ENCODE measurements at regions of chr10 and their contacts with region 1.

Region 1: GRCh38 chr10:34723750-34724149 is 91.3 kb downstream of the PARD3 start:
- DNase-seq: peak; percentile 78
- ATAC-seq: peak; percentile 76
- H3K4me3 ChIP-seq: no peak overlapping the region
- H3K27ac ChIP-seq: no peak overlapping the region
- H3K4me1 ChIP-seq: peaks cover 9% of the 10 kb centered on the region
- H3K27me3 ChIP-seq: no peaks in the 10 kb centered on the region
- CTCF ChIP-seq: peak; percentile 67
- POLR2A ChIP-seq: no peak
- RAD21 ChIP-seq: peak; percentile 77

Region 2: DNA sequence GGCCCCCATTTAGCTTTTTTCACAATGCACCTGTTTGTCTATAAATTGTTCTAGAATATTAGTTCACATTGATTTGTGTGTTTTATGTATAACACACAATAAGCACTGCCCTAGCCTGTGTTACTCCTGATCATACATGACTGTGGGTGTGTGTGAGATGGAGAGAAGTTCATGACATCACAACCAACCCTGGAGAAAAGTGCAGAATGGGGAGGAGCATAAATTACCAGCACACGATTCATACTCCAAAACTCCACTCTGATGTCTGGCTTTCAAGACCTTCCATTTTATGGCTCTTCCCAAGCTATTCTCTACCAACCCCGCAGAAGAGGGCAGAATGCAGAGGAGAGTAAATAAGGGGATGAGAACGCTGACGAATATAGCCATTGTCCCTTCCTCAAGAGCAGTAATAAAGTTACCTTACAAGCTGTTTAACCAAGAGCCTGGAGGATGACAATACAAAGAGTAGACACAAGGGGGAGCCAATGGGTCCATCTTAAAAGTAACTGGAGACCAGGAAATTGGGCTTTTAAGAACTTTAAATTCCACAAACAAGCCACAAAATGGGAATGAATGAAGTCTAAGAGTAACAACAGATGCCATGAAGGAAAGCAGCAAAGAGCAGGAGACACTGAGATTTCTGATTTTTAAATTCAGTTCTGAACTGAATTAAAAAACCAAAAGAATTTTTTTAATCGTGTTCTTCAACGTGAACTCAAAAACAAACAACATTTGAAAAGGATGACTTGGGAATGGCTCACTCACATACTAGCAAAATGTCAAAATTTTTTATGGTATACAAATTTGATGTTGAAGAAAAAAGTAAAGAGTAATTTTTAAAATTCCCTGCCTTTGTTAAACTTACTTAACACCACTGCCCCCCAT is 68.2 kb before region 1 on chr10:
- CTCF ChIA-PET with region 1: interaction called, 10 read pairs
- POLR2A ChIA-PET with region 1: no interaction called
- dilution Hi-C with region 1: no loop called
- in situ Hi-C with region 1: no loop called
- intact Hi-C with region 1: no loop called
- DNase-seq: peak; percentile 75
- ATAC-seq: peak; percentile 79
- H3K4me3 ChIP-seq: no peak overlapping the region
- H3K27ac ChIP-seq: no peak overlapping the region
- H3K4me1 ChIP-seq: peaks cover 5% of the 10 kb centered on the region
- H3K27me3 ChIP-seq: no peaks in the 10 kb centered on the region
- CTCF ChIP-seq: peak; percentile 66
- POLR2A ChIP-seq: no peak
- RAD21 ChIP-seq: peak; percentile 65

Region 3: GRCh38 chr10:34666008-34666705 is 57.6 kb before region 1 on chr10:
- CTCF ChIA-PET with region 1: no interaction called
- POLR2A ChIA-PET with region 1: no interaction called
- dilution Hi-C with region 1: no loop called
- in situ Hi-C with region 1: no loop called
- intact Hi-C with region 1: loop called (anchors 2 kb)
- DNase-seq: peak; percentile 94
- ATAC-seq: peak; percentile 95
- H3K4me3 ChIP-seq: no peak overlapping the region
- H3K27ac ChIP-seq: no peak overlapping the region
- H3K4me1 ChIP-seq: peaks cover 3% of the 10 kb centered on the region; the same call in 1 of the 2 replicates
- H3K27me3 ChIP-seq: no peaks in the 10 kb centered on the region
- CTCF ChIP-seq: peak; percentile 84
- POLR2A ChIP-seq: no peak
- RAD21 ChIP-seq: peak; percentile 91

Region 4: GRCh38 chr10:34815185-34816084 is 91.7 kb after region 1 on chr10 and contains the start of gene PARD3:
- CTCF ChIA-PET with region 1: interaction called, 5 read pairs
- POLR2A ChIA-PET with region 1: no interaction called
- dilution Hi-C with region 1: no loop called
- in situ Hi-C with region 1: no loop called
- intact Hi-C with region 1: loop called (anchors 5 kb)
- DNase-seq: peak; percentile 51
- ATAC-seq: peak; percentile 85
- H3K4me3 ChIP-seq: peak within 1 kb of the TSS; percentile 98
- H3K27ac ChIP-seq: peak within 1 kb of the TSS; percentile 93
- H3K4me1 ChIP-seq: peaks cover 4% of the 10 kb centered on the region
- H3K27me3 ChIP-seq: peaks cover 2% of the 10 kb centered on the region; the same call in 1 of the 2 replicates
- CTCF ChIP-seq: no peak
- POLR2A ChIP-seq: no peak
- RAD21 ChIP-seq: no peak
- total RNA-seq, gene PARD3: 34.2 and 37.5 TPM in 2 replicates

Region 5: GRCh38 chr10:34954168-34954567 is 230.4 kb after region 1 on chr10:
- CTCF ChIA-PET with region 1: no interaction called
- POLR2A ChIA-PET with region 1: no interaction called
- dilution Hi-C with region 1: no loop called
- in situ Hi-C with region 1: no loop called
- intact Hi-C with region 1: loop called (anchors 10 kb)
- DNase-seq: no peak
- ATAC-seq: no peak
- H3K4me3 ChIP-seq: no peak overlapping the region
- H3K27ac ChIP-seq: no peak overlapping the region
- H3K4me1 ChIP-seq: no peaks in the 10 kb centered on the region
- H3K27me3 ChIP-seq: peaks cover 2% of the 10 kb centered on the region
- CTCF ChIP-seq: no peak
- POLR2A ChIP-seq: no peak
- RAD21 ChIP-seq: no peak

Region 6: GRCh38 chr10:35027567-35027966 is 303.8 kb after region 1 on chr10:
- CTCF ChIA-PET with region 1: interaction called, 6 read pairs
- POLR2A ChIA-PET with region 1: no interaction called
- dilution Hi-C with region 1: no loop called
- in situ Hi-C with region 1: no loop called
- intact Hi-C with region 1: loop called (anchors 2 kb)
- DNase-seq: peak; percentile 39
- ATAC-seq: 0 out of 2 replicates have a peak, but pooled peaks have one; percentile 24
- H3K4me3 ChIP-seq: no peak overlapping the region
- H3K27ac ChIP-seq: no peak overlapping the region
- H3K4me1 ChIP-seq: no peaks in the 10 kb centered on the region
- H3K27me3 ChIP-seq: no peaks in the 10 kb centered on the region
- CTCF ChIP-seq: peak; percentile 57
- POLR2A ChIP-seq: no peak
- RAD21 ChIP-seq: peak; percentile 48

Measured in IMR-90 (cell line).